SK-N-SH (cell line): ENCODE measurements at regions of chr7 and their contacts with region 1.

Region 1: DNA sequence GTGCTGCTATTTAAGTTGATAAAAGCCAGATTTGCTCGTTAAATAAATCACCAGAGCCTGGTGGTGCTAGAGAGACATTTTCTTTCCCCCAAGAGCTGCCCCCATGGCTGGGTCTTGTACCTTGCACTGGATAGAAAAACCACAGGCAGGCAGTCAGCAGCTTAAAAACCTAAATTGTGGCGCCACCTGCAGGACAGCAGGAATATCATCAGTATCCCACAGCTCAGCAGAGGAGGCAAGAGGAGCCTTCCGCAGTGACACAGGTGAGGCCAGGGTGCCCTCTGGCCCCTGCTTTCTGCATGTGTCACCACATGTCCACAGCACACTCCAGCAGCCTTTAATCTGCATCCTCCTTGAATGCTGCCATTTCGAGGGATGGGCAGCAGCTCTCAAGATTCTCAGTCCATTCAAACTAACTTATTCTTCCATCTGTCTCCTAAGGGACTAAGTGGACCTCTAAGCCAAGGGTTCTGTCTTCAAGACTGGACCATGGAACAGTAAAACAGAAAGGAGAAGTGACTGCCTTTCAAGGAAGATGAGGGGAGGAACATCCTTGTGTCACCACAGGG is 4.5 kb upstream of the PLXNA4 start:
- DNase-seq: peak; percentile 84
- H3K4me3 ChIP-seq: no peak overlapping the region
- H3K27ac ChIP-seq: no peak overlapping the region
- H3K4me1 ChIP-seq: peaks cover 0 to 17% of the 10 kb centered on the region in 2 experiments; a peak in 2 of 4 replicates
- H3K27me3 ChIP-seq: peaks cover 13% of the 10 kb centered on the region; the same call in 1 of the 2 replicates
- CTCF ChIP-seq: peak; percentile 96
- EP300 ChIP-seq: 0 out of 4 replicates have a peak, but pooled peaks of 1 of the 2 experiments have one; percentile 23
- RAD21 ChIP-seq: peak; percentile 98

Region 2: GRCh38 chr7:132307465-132307864 is 273.3 kb before region 1 on chr7:
- CTCF ChIA-PET with region 1: interaction called, 65 read pairs
- POLR2A ChIA-PET with region 1: no interaction called
- DNase-seq: peak; percentile 44
- H3K4me3 ChIP-seq: no peak overlapping the region
- H3K27ac ChIP-seq: no peak overlapping the region
- H3K4me1 ChIP-seq: peaks cover 0 to 17% of the 10 kb centered on the region in 2 experiments; a peak in 1 of 4 replicates
- H3K27me3 ChIP-seq: no peaks in the 10 kb centered on the region
- CTCF ChIP-seq: peak; percentile 37
- EP300 ChIP-seq: no peak
- RAD21 ChIP-seq: peak; percentile 18; the same call in 1 of the 2 replicates

Region 3: DNA sequence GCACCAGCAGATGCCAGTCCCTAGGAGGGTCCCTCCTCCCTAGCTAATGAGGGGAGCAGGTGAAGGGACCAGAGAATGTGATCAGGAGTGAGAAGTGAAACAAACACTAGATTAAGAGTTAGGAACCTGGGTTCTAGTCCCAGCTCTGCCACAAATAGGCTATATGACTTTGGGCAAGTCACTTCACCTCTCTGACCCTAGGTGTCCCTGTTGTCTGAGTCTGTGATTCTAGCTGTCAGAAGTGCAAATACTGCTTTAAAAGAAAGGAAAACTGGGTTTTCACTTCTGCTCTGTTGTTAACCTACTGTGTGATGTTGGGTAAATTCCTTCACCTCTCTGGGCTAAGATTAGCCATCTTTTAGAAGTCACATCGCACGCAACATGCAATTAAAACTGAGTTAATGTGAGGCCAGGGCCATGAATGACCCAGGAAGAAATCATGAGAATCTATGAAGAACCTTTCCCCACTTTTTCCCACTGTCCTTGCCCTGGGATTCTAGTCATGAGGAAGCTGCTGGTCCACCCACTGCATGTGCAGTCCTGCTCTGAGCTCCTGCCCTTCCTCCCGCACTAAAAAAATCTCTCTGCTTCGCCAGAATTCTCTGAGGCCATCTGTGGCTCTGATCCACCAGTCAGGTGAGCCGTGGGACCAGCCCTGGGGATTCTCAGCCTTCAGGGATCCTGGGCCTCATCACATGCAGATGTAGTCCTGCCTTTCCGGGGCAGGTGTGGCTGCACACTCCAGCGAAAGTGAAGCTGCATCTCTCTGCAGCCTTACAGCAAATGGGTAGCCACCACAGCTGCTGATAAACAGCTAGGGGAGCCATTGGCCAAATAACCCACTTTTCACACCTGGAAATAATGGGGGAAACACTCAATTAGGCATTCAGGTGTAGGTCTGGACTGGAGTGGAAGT is 186.3 kb before region 1 on chr7:
- CTCF ChIA-PET with region 1: interaction called, 121 read pairs
- POLR2A ChIA-PET with region 1: no interaction called
- DNase-seq: peak; percentile 41
- H3K4me3 ChIP-seq: no peak overlapping the region
- H3K27ac ChIP-seq: peak overlapping the region in 1 of 2 experiments; percentile 14; a peak in 1 of 4 replicates
- H3K4me1 ChIP-seq: peaks cover 0 to 37% of the 10 kb centered on the region in 2 experiments; a peak in 1 of 4 replicates
- H3K27me3 ChIP-seq: no peaks in the 10 kb centered on the region
- CTCF ChIP-seq: peak; percentile 58
- EP300 ChIP-seq: no peak
- RAD21 ChIP-seq: peak; percentile 81

Region 4: DNA sequence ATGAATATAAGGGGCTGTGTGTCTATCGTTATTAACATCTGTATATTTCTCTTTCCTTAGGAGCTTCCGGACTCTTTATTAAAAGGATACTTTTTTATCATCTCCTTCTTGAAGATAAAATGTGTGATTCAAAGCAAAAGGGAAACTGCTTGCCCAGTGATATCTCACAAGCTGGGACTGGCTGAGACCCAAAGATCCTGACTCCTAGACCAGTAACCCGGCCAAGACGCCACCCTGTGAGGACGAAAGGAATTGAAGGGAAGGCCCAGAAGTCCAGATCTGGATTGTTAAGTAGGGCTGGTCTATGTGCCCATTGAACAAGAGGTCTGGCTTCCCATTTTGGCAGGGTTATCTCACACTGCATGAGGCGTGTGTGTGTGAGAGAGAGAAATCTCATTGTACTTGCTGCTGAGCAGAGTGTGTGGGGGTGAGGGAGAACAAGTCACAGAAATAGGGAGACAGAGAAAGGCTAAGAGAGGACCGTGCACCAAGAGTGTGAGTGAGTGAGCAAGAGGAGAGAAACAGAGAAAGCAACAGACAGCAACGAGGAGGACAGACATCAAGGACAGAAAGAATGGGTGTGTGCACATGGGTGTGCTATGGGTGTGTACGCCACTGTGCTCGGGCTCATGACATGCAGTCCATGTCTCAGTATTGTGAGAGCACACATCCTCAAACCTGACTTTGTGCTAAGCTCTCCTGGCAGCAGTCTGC is 79.9 kb before region 1 on chr7:
- CTCF ChIA-PET with region 1: interaction called, 14 read pairs
- POLR2A ChIA-PET with region 1: no interaction called
- DNase-seq: peak; percentile 43
- H3K4me3 ChIP-seq: no peak overlapping the region
- H3K27ac ChIP-seq: no peak overlapping the region; a peak in 1 of 4 replicates
- H3K4me1 ChIP-seq: peaks cover 0 to 72% of the 10 kb centered on the region in 2 experiments; a peak in 2 of 4 replicates
- H3K27me3 ChIP-seq: no peaks in the 10 kb centered on the region
- CTCF ChIP-seq: peak; percentile 57
- EP300 ChIP-seq: no peak
- RAD21 ChIP-seq: peak; percentile 61

Region 5: DNA sequence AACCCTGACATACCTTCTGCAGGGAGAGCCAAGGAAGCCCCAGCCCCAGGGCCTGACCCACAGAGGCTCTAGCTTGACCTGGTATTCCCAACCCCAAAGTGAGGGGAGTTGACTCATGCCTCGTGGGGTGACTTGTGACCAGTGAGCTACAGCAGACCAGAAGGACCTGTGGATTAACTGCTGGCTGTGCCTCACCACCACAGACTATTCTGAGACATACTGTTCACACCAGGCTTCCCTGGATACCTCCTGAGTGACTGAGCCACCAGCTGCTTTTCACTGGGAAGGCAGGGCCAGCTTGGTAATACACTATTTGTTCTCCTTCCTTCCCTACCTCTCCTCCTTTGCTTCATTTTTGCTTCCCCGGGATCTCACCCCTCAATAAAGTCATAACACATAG is 11.8 kb before region 1 on chr7:
- CTCF ChIA-PET with region 1: interaction called, 36 read pairs
- POLR2A ChIA-PET with region 1: no interaction called
- DNase-seq: no peak
- H3K4me3 ChIP-seq: no peak overlapping the region
- H3K27ac ChIP-seq: no peak overlapping the region
- H3K4me1 ChIP-seq: peaks cover 0 to 10% of the 10 kb centered on the region in 2 experiments; a peak in 1 of 4 replicates
- H3K27me3 ChIP-seq: no peaks in the 10 kb centered on the region; the same call in 1 of the 2 replicates
- CTCF ChIP-seq: no peak
- EP300 ChIP-seq: no peak
- RAD21 ChIP-seq: no peak